Activated naive CD4-positive, alpha-beta T cell treated with anti-CD3 and anti-CD28 coated beads for 36 hours (primary cell): ENCODE measurements at regions of chr2 and their contacts with region 1.

Region 1: DNA sequence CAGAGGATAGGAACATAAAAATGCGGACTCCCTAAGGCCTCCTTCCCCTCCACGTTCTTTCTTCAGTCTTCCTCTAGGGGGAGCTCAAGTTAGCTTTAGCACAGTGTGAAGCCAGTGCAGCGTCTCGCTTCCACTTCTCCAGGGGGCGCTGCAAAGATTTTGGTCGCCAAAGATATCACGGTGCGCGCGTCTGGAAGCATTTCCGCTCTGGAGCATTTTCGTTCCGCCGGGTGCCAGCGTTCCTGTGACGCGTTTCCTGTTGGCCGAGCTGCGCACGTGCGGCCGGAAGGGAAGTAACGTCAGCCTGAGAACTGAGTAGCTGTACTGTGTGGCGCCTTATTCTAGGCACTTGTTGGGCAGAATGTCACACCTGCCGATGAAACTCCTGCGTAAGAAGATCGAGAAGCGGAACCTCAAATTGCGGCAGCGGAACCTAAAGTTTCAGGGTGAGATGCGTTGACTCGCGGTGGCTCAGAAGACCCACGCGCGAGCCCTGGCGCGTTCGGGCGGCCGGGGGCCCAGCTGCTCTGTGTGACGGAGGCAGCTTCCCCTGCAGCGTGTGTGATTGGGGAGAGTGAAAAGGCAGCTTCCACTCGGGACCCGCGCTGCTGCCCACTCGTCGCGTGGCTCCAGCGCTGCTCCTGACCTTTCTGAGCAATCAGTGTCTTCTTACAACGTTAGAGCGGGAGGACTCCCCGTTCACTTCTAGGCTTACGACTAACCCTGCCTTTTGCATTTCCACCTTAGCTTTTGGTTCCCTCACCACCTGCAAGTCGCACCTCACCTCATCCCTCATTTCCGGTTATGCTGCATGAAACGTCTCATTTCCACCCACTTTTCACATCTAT is at the start of gene DDX18:
- DNase-seq: peak; percentile 99
- H3K4me3 Mint-ChIP-seq: peak within 1 kb of the TSS; percentile 91
- H3K27ac Mint-ChIP-seq: peak within 1 kb of the TSS; percentile 97
- H3K4me1 Mint-ChIP-seq: peaks cover 42% of the 10 kb centered on the region
- H3K27me3 Mint-ChIP-seq: no peaks in the 10 kb centered on the region
- total RNA-seq, gene DDX18: 106 to 119 TPM

Region 2: GRCh38 chr2:117835990-117836760 is 21.5 kb after region 1 on chr2:
- CTCF ChIA-PET with region 1: interaction called, 6 read pairs
- intact Hi-C with region 1: loop called (anchors 2 kb)
- DNase-seq: peak; percentile 73
- H3K4me3 Mint-ChIP-seq: peak overlapping the region; percentile 67
- H3K27ac Mint-ChIP-seq: no peak overlapping the region
- H3K4me1 Mint-ChIP-seq: peaks cover 12% of the 10 kb centered on the region
- H3K27me3 Mint-ChIP-seq: no peaks in the 10 kb centered on the region

Region 3: DNA sequence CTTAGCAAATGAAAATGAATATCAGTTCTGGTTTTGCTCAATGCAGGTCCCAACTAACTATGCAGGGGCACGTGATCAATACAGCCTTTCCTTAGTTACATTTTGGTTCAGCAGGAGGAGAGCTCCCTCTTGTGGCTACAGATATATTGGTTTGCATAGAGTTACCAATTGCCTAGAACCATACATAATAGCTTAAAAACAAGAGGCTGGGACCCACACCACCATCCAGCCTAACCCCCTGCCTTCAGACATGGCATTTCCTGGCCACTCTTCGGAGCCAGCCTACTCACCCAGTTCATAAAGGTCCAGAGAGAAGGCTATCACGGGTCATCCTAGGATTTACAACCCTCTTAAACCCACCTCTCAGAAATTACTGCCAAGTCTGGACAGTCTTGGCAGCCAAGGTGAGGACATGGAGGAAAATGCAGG is 188.8 kb after region 1 on chr2:
- CTCF ChIA-PET with region 1: interaction called, 27 read pairs
- intact Hi-C with region 1: loop called (anchors 1 kb)
- DNase-seq: peak; percentile 69
- H3K4me3 Mint-ChIP-seq: no peak overlapping the region
- H3K27ac Mint-ChIP-seq: no peak overlapping the region
- H3K4me1 Mint-ChIP-seq: peaks cover 22% of the 10 kb centered on the region
- H3K27me3 Mint-ChIP-seq: no peaks in the 10 kb centered on the region

Region 4: DNA sequence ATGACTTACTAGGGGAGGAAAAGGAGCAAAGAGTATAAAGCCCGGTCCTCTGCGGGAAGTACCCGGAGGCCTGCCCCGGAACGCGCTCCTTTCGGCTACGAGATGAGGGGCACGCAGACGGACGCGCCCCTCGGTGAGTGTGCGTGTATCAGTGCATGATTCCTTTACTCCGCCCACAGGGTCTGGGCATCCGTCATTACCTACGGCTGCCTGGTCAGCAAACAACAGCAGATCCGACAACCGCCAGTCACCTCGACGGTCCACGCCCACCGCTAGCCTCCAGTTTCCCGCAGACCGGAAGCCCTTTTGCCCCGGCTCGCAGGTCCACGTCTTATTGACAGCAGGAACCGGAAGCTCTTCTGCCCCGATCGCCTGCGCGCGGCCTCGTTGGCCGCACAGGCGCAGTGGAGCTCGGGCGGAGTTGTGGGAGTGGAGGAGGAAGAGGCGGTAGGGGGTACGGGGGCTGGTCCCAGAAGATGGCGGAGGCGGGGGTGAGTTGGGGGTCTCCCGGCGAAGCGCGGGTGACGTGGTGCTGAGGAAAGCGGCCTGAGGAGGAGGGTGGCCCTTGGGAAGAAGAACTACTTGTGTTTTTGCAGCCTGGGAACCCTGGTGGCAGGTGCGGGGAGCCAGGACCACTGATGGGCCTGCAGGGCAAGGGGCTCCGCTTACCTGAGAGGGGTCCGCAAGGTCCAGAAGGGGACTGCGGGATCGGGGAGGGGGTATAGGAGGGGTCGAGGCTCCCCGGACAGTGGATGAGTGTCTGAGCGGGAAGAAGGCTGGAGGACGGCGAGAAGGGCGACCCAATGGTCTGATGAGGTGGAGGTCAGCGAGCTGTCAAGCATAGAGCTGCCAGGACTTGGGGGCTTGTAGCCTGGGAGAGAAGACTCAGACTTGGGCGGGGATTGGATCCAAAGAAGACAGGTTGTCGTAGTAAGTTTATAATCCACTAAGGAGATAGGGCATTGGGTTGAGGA is 273.7 kb after region 1 on chr2 and contains the start of gene INSIG2:
- CTCF ChIA-PET with region 1: interaction called, 4 read pairs
- intact Hi-C with region 1: loop called (anchors 1 kb)
- DNase-seq: peak; percentile 94
- H3K4me3 Mint-ChIP-seq: peak within 1 kb of the TSS; percentile 86
- H3K27ac Mint-ChIP-seq: peak within 1 kb of the TSS; percentile 83
- H3K4me1 Mint-ChIP-seq: peaks cover 16% of the 10 kb centered on the region
- H3K27me3 Mint-ChIP-seq: no peaks in the 10 kb centered on the region
- total RNA-seq, gene INSIG2: 14.3 to 19.3 TPM

Region 5: GRCh38 chr2:118309946-118310680 is 495.5 kb after region 1 on chr2:
- CTCF ChIA-PET with region 1: no interaction called
- intact Hi-C with region 1: loop called (anchors 1 kb)
- DNase-seq: peak; percentile 69
- H3K4me3 Mint-ChIP-seq: peak overlapping the region; percentile 79
- H3K27ac Mint-ChIP-seq: peak overlapping the region; percentile 90
- H3K4me1 Mint-ChIP-seq: peaks cover 2% of the 10 kb centered on the region
- H3K27me3 Mint-ChIP-seq: no peaks in the 10 kb centered on the region

Region 6: GRCh38 chr2:119366649-119367471 is 1552.2 kb after region 1 on chr2 and contains the starts of genes C2orf76 and DBI:
- CTCF ChIA-PET with region 1: no interaction called
- intact Hi-C with region 1: loop called (anchors 1 kb)
- DNase-seq: peak; percentile 94
- H3K4me3 Mint-ChIP-seq: peak within 1 kb of the TSS; percentile 99
- H3K27ac Mint-ChIP-seq: peak within 1 kb of the TSS; percentile 92
- H3K4me1 Mint-ChIP-seq: peaks cover 42% of the 10 kb centered on the region
- H3K27me3 Mint-ChIP-seq: no peaks in the 10 kb centered on the region
- total RNA-seq, gene C2orf76: 9.5 to 11.1 TPM
- total RNA-seq, gene DBI: 133 to 134 TPM